Lower leg skin (tissue), 4 donors: ENCODE measurements at regions of chr2 and their contacts with region 1.

Region 1: GRCh38 chr2:164523009-164523408 is 98.3 kb downstream of the GRB14 start:
- DNase-seq: no peak
- H3K4me3 ChIP-seq: no peak overlapping the region
- CTCF ChIP-seq: no peak
- POLR2A ChIP-seq: no peak

Region 2: DNA sequence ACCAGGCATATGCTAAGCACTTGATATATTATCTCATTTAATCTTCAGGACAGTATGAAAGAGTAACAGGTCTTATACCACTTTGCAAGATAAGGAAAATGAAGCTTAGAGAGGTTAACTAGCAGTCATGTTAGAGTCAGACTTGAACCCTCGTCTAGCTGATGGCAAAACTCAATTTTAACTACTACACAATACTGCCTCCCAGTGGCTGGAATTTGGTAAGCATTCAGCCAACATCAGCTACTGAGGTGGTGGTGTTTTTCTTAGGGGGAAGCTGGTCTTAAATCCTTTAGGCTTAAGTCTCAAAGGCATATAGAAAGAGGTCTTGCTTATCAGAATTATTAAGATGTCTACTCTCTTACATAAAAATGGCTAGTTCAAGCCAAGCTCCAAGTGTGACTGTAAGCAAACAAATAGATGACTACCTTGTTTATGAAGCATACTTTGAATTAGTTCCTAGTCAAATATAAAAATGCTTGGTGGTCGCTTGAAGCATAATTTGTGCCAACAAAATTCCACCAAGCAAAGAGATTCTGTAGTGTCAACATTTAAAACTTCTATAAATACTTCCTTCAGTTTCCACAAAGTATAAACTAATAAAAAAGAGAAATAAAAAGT is 461.8 kb before region 1 on chr2:
- intact Hi-C with region 1: no loop called
- DNase-seq: no peak
- H3K4me3 ChIP-seq: no peak overlapping the region
- CTCF ChIP-seq: no peak
- POLR2A ChIP-seq: no peak

Region 3: GRCh38 chr2:164538240-164538866 is 15.3 kb after region 1 on chr2:
- intact Hi-C with region 1: no loop called
- DNase-seq: no peak
- H3K4me3 ChIP-seq: no peak overlapping the region
- CTCF ChIP-seq: no peak
- POLR2A ChIP-seq: no peak

Region 4: DNA sequence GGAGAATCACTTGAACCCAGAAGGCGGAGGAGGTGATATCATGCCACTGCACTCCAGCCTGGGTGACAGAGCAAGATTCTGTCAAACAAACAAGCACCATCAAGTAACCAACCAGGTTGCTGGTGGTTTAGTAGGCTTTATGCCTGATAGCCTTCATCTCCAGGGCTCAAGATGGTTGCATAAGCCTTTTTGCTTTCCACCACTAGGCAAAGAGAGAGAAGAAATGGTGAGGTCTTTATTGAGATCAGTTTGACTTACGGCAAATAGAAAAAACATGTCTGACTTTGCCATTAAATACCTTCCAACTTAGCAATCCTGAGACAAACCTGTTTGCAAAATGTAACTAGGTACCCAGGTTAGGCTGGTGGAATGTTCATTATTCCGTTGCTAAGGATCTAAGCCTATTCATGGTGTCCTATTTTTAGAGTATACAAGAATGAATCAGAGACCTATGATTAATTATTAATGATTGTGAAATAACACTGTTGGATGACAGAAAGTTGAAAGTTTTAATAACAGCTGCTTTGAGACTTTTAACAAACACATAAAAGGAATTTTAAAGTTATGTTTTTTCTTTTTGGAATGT is 485.8 kb after region 1 on chr2:
- intact Hi-C with region 1: loop called (anchors 5 kb)
- DNase-seq: no peak
- H3K4me3 ChIP-seq: no peak overlapping the region
- CTCF ChIP-seq: no peak
- POLR2A ChIP-seq: no peak